ENCODE measurements at regions of chr4 and their contacts with region 1.

Region 1: DNA sequence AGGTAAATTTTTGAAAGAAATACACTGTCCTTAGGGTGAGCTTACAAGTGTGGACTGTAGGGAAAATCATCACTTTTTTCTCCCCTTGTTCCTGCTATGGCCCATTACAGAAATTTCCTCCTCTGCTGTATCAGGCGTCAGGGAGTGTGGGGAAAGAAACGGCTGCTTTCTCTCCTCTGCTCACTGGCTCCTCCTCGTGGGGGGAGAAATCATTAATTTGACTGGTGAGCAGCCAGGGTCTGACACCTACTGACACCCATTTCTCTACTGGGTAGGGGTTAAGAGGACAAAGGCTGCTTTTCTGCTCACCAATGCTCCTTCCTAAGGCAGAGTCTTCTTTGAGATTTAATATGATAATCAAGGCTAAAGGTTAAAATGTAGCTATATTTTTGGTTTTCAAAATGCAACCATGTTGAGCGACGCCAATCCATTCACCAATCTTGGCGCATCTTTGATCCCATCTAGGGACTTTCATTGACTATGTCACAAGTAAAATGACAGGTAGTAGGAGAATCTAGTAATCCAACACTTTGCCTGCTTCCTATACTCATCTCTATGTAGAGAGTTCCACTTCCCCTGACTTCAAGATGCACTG is 25.1 kb downstream of the SETD7 start:
- DNase-seq: peak; percentile 63
- ATAC-seq: peak; percentile 77
- H3K4me3 Mint-ChIP-seq: no peak overlapping the region
- H3K27ac Mint-ChIP-seq: no peak overlapping the region
- H3K4me1 Mint-ChIP-seq: peaks cover 7% of the 10 kb centered on the region
- H3K27me3 Mint-ChIP-seq: no peaks in the 10 kb centered on the region
- CTCF ChIP-seq: peak; percentile 77

Region 2: DNA sequence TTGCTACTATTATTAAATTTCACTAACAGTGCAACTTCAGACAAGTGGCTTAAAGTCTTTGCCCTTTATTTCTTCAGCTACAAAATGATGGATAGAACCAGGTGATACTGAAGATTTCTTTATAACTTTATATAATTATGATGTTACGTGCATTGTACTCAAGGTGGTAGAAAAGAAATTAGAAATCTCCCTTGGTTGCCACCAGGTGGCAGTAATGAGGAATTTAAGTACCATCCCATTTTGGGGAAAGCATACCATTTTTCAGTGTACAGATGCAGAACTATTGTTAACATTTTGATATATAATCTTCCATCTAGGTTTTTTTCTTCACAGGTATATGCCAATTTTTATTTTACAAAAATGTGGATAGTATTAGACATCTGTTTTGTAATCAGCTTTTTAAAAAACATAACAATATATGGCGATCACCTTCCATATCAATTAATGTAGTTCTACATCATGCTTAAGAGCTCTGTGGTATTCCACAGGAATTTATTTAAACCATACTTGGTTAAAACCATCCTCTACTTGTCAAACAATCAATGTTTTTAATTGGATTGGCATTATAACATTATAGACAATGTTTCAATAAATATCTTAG is 114.8 kb before region 1 on chr4:
- CTCF ChIA-PET with region 1: interaction called, 12 read pairs
- POLR2A ChIA-PET with region 1: no interaction called
- intact Hi-C with region 1: loop called (anchors 5 kb)
- DNase-seq: peak; percentile 24
- ATAC-seq: no peak
- H3K4me3 Mint-ChIP-seq: no peak overlapping the region
- H3K27ac Mint-ChIP-seq: no peak overlapping the region
- H3K4me1 Mint-ChIP-seq: peaks cover 12% of the 10 kb centered on the region
- H3K27me3 Mint-ChIP-seq: no peaks in the 10 kb centered on the region
- CTCF ChIP-seq: peak; percentile 83

Measured in activated CD8-positive, alpha-beta T cell treated with anti-CD3 and anti-CD28 coated beads for 36 hours (primary cell).